ENCODE measurements at regions of chr1 and their contacts with region 1.

Region 1: GRCh38 chr1:14571819-14572767 is 26.4 kb upstream of the KAZN start:
- DNase-seq: peak; percentile 48 to 64 (median 62)
- ATAC-seq: peak; percentile 96
- H3K4me3 ChIP-seq: no peak overlapping the region
- H3K27ac ChIP-seq: no peak overlapping the region
- H3K4me1 ChIP-seq: no peaks in the 10 kb centered on the region
- H3K27me3 ChIP-seq: no peaks in the 10 kb centered on the region; a peak in 1 of 5 replicates
- CTCF ChIP-seq: peak; percentile 72 to 87 (median 72)
- EP300 ChIP-seq: no peak
- POLR2A ChIP-seq: no peak
- RAD21 ChIP-seq: peak; percentile 55 to 78

Region 2: GRCh38 chr1:15046487-15047165 is 474.5 kb after region 1 on chr1:
- CTCF ChIA-PET with region 1: no interaction called
- POLR2A ChIA-PET with region 1: no interaction called
- in situ Hi-C with region 1: no loop called
- intact Hi-C with region 1: loop called (anchors 10 kb)
- DNase-seq: peak; percentile 83 to 91 (median 88)
- ATAC-seq: peak; percentile 96
- H3K4me3 ChIP-seq: no peak overlapping the region
- H3K27ac ChIP-seq: no peak overlapping the region
- H3K4me1 ChIP-seq: no peaks in the 10 kb centered on the region
- H3K27me3 ChIP-seq: no peaks in the 10 kb centered on the region
- CTCF ChIP-seq: peak; percentile 89 to 96 (median 93)
- EP300 ChIP-seq: no peak
- POLR2A ChIP-seq: no peak
- RAD21 ChIP-seq: peak; percentile 87 to 96